ENCODE measurements at regions of chr6 and their contacts with region 1.

Region 1: GRCh38 chr6:32971581-32972352 is 3.4 kb downstream of the BRD2 start:
- DNase-seq: peak; percentile 84 to 100 (median 92)
- ATAC-seq: peak; percentile 55
- H3K4me3 ChIP-seq: peak overlapping the region; percentile 70
- H3K27ac ChIP-seq: peak overlapping the region; percentile 99
- H3K4me1 ChIP-seq: peaks cover 19 to 23% of the 10 kb centered on the region in 2 experiments; a peak in 4 of 5 replicates
- H3K27me3 ChIP-seq: no peaks in the 10 kb centered on the region
- CTCF ChIP-seq: no peak
- EP300 ChIP-seq: peak; percentile 34; the same call in 1 of the 2 replicates
- POLR2A ChIP-seq: peak; percentile 100
- RAD21 ChIP-seq: peak in 1 of 2 experiments; percentile 11; a peak in 1 of 4 replicates

Region 2: DNA sequence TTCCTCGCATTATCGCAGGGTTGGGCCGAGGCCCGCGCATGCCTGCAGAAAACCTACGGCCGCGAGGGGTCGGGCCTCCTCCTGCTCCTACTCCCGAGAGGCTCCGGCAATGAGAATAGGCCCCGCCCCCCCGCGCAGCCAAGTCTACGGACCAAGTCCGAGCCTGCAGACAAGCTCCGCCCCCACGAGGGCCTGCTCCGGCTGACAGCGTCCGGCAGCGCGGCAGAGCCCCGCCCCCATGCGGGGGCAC is 776.2 kb before region 1 on chr6:
- CTCF ChIA-PET with region 1: no interaction called
- POLR2A ChIA-PET with region 1: interaction called, 4 read pairs
- in situ Hi-C with region 1: no loop called
- intact Hi-C with region 1: loop called (anchors 5 kb)
- DNase-seq: peak; percentile 96 to 100 (median 97)
- ATAC-seq: peak; percentile 91
- H3K4me3 ChIP-seq: peak overlapping the region; percentile 63
- H3K27ac ChIP-seq: no peak overlapping the region
- H3K4me1 ChIP-seq: peaks cover 60 to 61% of the 10 kb centered on the region in 2 experiments
- H3K27me3 ChIP-seq: no peaks in the 10 kb centered on the region; a peak in 1 of 5 replicates
- CTCF ChIP-seq: peak; percentile 39 to 75 (median 63); a peak in 5 of 6 replicates
- EP300 ChIP-seq: 0 out of 2 replicates have a peak, but pooled peaks have one; percentile 2
- POLR2A ChIP-seq: no peak
- RAD21 ChIP-seq: no peak

Region 3: GRCh38 chr6:32609731-32610640 is 361.8 kb before region 1 on chr6:
- CTCF ChIA-PET with region 1: no interaction called
- POLR2A ChIA-PET with region 1: no interaction called
- in situ Hi-C with region 1: no loop called
- intact Hi-C with region 1: no loop called
- DNase-seq: peak; percentile 67 to 84 (median 76)
- ATAC-seq: peak; percentile 100
- H3K4me3 ChIP-seq: no peak overlapping the region
- H3K27ac ChIP-seq: peak overlapping the region; percentile 36; the same call in 1 of the 3 replicates
- H3K4me1 ChIP-seq: peaks cover 0 to 3% of the 10 kb centered on the region in 2 experiments; a peak in 1 of 5 replicates
- H3K27me3 ChIP-seq: no peaks in the 10 kb centered on the region
- CTCF ChIP-seq: no peak
- EP300 ChIP-seq: no peak
- POLR2A ChIP-seq: no peak
- RAD21 ChIP-seq: no peak

Region 4: GRCh38 chr6:32843979-32844838 is 127.6 kb before region 1 on chr6 and contains the start of gene PSMB8:
- CTCF ChIA-PET with region 1: interaction called, 3 read pairs
- POLR2A ChIA-PET with region 1: interaction called, 27 read pairs
- in situ Hi-C with region 1: no loop called
- intact Hi-C with region 1: no loop called
- DNase-seq: peak; percentile 91 to 92 (median 91)
- ATAC-seq: peak; percentile 100
- H3K4me3 ChIP-seq: peak within 1 kb of the TSS; percentile 17
- H3K27ac ChIP-seq: no peak within 1 kb of the TSS
- H3K4me1 ChIP-seq: peaks cover 0 to 16% of the 10 kb centered on the region in 2 experiments; a peak in 3 of 5 replicates
- H3K27me3 ChIP-seq: peaks cover 4 to 33% of the 10 kb centered on the region in 2 experiments; a peak in 2 of 5 replicates
- CTCF ChIP-seq: no peak; a peak in 1 of 6 replicates
- EP300 ChIP-seq: no peak
- POLR2A ChIP-seq: no peak
- RAD21 ChIP-seq: no peak
- polyA plus RNA-seq, gene PSMB8: 2.4 to 2.6 TPM

Region 5: GRCh38 chr6:32905078-32905477 is 66.7 kb before region 1 on chr6:
- CTCF ChIA-PET with region 1: no interaction called
- POLR2A ChIA-PET with region 1: interaction called, 20 read pairs
- in situ Hi-C with region 1: no loop called
- intact Hi-C with region 1: no loop called
- DNase-seq: no peak
- ATAC-seq: no peak
- H3K4me3 ChIP-seq: no peak overlapping the region
- H3K27ac ChIP-seq: no peak overlapping the region
- H3K4me1 ChIP-seq: no peaks in the 10 kb centered on the region
- H3K27me3 ChIP-seq: peaks cover 4 to 5% of the 10 kb centered on the region in 2 experiments; a peak in 2 of 5 replicates
- CTCF ChIP-seq: no peak
- EP300 ChIP-seq: no peak
- POLR2A ChIP-seq: no peak
- RAD21 ChIP-seq: no peak

Region 6: GRCh38 chr6:32933636-32934085 is 38.1 kb before region 1 on chr6:
- CTCF ChIA-PET with region 1: interaction called, 5 read pairs
- POLR2A ChIA-PET with region 1: interaction called, 65 read pairs
- in situ Hi-C with region 1: no loop called
- intact Hi-C with region 1: loop called (anchors 1 kb)
- DNase-seq: peak; percentile 78 to 85 (median 82)
- ATAC-seq: peak; percentile 92
- H3K4me3 ChIP-seq: no peak overlapping the region
- H3K27ac ChIP-seq: no peak overlapping the region
- H3K4me1 ChIP-seq: no peaks in the 10 kb centered on the region
- H3K27me3 ChIP-seq: peaks cover 17 to 34% of the 10 kb centered on the region in 2 experiments
- CTCF ChIP-seq: peak; percentile 85 to 94 (median 91)
- EP300 ChIP-seq: no peak
- POLR2A ChIP-seq: no peak
- RAD21 ChIP-seq: peak; percentile 86 to 91

Region 7: DNA sequence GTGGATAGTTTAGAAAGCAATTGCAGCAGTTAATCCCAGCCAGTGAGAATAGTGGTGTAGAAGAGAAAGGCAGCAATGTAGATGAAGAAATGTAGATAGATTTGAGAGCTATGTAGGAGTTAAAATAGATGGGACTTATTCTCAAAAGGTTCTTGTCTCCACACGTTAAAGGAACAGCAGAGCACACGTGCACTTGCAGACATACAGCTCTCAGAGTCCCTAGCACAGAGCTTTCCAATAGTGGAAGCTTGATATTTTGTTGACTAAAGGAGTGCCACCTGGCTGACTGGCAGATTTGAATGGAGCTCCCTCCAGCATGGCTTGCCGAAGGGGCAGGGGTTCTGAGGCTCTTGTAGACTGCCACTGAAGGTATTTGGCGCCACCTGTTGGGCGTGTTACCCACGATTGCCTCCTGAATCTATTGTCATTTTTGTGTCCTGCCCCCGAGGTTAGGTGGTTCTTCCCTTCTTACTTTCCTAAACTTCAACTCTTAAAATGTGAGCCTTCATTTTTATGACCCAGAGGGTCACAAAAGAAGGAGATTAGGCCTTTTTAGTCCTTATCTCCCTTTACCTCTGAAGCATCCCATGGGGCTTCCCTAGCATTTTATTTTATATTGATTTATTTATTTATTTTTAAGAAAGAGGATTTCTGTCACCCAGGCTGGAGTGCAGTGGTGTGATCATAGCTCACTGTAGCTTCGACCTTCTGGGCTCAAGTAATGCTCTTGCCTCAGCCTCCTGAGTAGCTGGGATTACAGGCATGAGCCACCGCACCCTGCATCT is 13.0 kb after region 1 on chr6:
- CTCF ChIA-PET with region 1: interaction called, 4 read pairs
- POLR2A ChIA-PET with region 1: interaction called, 384 read pairs
- in situ Hi-C with region 1: no loop called
- intact Hi-C with region 1: no loop called
- DNase-seq: peak; percentile 80 to 93 (median 80)
- ATAC-seq: peak; percentile 75
- H3K4me3 ChIP-seq: no peak overlapping the region
- H3K27ac ChIP-seq: no peak overlapping the region
- H3K4me1 ChIP-seq: peaks cover 0 to 6% of the 10 kb centered on the region in 2 experiments; a peak in 2 of 5 replicates
- H3K27me3 ChIP-seq: peaks cover 8 to 15% of the 10 kb centered on the region in 2 experiments; a peak in 3 of 5 replicates
- CTCF ChIP-seq: peak; percentile 95 to 99 (median 97)
- EP300 ChIP-seq: no peak
- POLR2A ChIP-seq: no peak
- RAD21 ChIP-seq: peak; percentile 97 to 99

Measured in K562 (cell line).